T-cell (primary cell): ENCODE measurements at regions of chr4 and their contacts with region 1.

Region 1: DNA sequence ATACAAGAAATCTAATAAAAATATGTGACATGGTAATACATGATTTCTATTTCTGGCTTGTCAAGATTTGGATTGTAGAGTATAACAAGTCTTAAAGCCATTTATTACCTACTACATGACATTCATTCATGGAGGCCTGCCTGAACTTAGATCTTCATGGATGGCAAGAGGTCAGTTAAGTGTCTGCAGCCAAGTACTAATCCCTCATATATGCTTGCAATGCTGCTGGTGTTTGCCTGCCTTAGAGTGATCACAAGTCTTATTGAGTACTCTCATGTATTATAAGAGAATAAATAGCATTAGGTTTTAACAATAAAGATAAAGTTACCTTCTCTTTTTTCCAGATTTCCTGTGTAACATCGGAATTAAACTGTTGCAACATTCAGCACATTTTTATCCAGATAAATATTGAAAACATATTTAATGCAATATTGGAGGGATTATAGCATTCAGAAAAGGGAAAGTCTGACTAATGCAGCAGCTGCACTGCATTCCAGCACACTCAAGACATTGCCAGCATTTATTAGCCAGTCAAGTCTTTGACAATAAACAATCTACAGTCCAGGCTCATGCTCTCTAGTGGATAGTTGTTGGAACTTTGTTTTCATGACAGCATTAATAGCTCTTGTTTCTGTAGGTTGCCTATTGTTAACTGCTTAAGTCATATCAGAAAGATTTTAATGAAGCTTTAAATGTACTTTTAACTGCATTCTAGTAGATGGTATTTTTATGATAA is 737.1 kb downstream of the FAT4 start:
- DNase-seq: no peak
- ATAC-seq: no peak
- H3K4me3 ChIP-seq: no peak overlapping the region
- H3K4me3 Mint-ChIP-seq: no peak overlapping the region
- H3K27ac ChIP-seq: no peak overlapping the region
- H3K27ac Mint-ChIP-seq: no peak overlapping the region
- H3K4me1 ChIP-seq: no peaks in the 10 kb centered on the region
- H3K4me1 Mint-ChIP-seq: no peaks in the 10 kb centered on the region
- H3K27me3 ChIP-seq: no peaks in the 10 kb centered on the region
- H3K27me3 Mint-ChIP-seq: no peaks in the 10 kb centered on the region

Region 2: GRCh38 chr4:124953061-124953460 is 1098.8 kb before region 1 on chr4:
- CTCF ChIA-PET with region 1: no interaction called
- POLR2A ChIA-PET with region 1: interaction called in 1 of 2 experiments, 10 read pairs
- DNase-seq: no peak
- ATAC-seq: no peak
- H3K4me3 ChIP-seq: no peak overlapping the region
- H3K4me3 Mint-ChIP-seq: no peak overlapping the region
- H3K27ac ChIP-seq: no peak overlapping the region
- H3K27ac Mint-ChIP-seq: no peak overlapping the region
- H3K4me1 ChIP-seq: no peaks in the 10 kb centered on the region
- H3K4me1 Mint-ChIP-seq: no peaks in the 10 kb centered on the region
- H3K27me3 ChIP-seq: no peaks in the 10 kb centered on the region
- H3K27me3 Mint-ChIP-seq: no peaks in the 10 kb centered on the region